ENCODE measurements at regions of chr11 and their contacts with region 1.

Region 1: DNA sequence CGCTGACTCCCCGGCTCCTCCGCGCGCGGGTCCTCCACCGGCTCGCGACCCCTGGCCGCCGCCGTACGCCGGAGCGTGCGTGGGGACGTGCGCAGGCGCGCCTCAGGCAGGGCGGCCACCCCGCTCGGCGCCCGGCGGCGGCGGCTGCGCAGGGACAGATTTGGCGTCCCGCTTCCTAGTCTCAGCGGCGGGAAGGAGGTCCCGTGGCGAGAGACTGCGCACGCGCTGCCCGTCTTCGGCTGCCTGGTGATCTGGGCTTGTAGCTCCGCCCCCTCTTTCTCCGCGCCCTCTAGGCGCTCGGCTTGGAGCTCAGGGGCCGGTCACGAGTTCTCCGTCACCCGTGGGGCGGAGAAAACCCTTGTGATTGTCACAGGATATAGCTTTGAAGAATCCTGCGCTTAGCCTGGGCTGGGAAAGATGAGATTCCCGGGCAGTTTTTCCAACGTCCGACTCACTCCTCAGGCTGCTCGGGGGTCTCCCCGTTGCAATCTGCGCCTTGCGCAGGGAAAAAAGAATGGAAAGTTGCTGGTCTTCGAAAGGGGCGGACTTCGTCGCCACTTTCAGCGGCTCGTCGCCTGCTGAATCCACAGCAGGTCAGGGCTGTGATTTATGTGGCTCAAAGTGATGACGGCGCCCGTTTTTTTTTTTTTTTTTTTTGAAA is at the start of gene PATL1:
- DNase-seq: peak; percentile 99 to 100 (median 100)
- ATAC-seq: peak; percentile 97 to 99 (median 98)
- H3K4me3 ChIP-seq: peak within 1 kb of the TSS; percentile 71 to 99 (median 90)
- H3K27ac ChIP-seq: peak within 1 kb of the TSS; percentile 82 to 99 (median 94)
- H3K4me1 ChIP-seq: peaks cover 6 to 41% (median 20%) of the 10 kb centered on the region in 12 donors
- H3K27me3 ChIP-seq: no peaks in the 10 kb centered on the region
- CTCF ChIP-seq: no peak
- POLR2A ChIP-seq: peak; percentile 9 to 89
- total RNA-seq, gene PATL1: 14.4 to 33.3 (median 24.8) TPM

Region 2: DNA sequence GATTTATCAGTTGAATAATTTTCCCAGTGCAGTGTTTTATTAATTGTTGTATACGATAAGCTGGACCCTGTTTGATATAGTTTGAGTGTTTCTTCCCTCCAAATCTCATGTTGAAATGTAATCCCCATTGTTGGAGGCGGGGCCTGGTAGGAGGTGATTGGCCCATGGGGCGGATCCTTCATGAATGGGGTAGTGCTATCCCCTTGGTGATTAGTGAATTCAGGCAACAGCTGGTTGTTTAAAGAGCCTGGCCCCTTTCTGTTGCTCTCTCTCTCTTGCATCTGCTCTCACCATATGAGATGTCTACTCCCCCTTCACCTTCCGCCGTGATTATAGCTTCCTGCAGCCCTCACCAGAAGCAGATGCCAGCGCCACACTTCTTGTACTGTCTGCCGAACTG is 231.3 kb before region 1 on chr11:
- intact Hi-C with region 1: no loop called
- DNase-seq: no peak
- ATAC-seq: no peak
- H3K4me3 ChIP-seq: no peak overlapping the region
- H3K27ac ChIP-seq: no peak overlapping the region
- H3K4me1 ChIP-seq: no peaks in the 10 kb centered on the region
- H3K27me3 ChIP-seq: no peaks in the 10 kb centered on the region
- CTCF ChIP-seq: no peak
- POLR2A ChIP-seq: no peak

Region 3: DNA sequence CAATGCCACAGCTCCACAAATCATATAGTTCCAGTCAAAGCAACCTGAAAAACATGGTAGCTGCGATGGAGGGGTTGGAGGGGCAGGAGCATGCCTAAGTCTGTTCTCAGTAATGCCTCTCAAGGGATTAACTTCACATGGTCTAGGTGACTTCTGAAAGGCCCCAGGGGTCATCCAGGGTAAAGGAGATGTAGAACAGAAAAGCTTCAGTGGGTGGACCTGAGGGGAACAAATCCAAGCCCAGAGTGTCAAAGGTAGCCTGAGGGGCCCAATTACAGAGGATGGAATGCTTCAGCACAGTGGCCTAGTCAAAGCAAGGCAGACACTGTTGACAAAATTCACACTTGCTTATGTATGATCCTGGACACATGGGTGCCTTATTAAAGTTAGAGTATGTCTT is 134.4 kb before region 1 on chr11:
- intact Hi-C with region 1: loop called in 2 of 10 experiments (anchors 5 kb)
- DNase-seq: no peak
- ATAC-seq: no peak
- H3K4me3 ChIP-seq: no peak overlapping the region
- H3K27ac ChIP-seq: no peak overlapping the region
- H3K4me1 ChIP-seq: peaks cover 0 to 10% (median 0%) of the 10 kb centered on the region in 12 donors
- H3K27me3 ChIP-seq: no peaks in the 10 kb centered on the region
- CTCF ChIP-seq: no peak
- POLR2A ChIP-seq: no peak

Region 4: DNA sequence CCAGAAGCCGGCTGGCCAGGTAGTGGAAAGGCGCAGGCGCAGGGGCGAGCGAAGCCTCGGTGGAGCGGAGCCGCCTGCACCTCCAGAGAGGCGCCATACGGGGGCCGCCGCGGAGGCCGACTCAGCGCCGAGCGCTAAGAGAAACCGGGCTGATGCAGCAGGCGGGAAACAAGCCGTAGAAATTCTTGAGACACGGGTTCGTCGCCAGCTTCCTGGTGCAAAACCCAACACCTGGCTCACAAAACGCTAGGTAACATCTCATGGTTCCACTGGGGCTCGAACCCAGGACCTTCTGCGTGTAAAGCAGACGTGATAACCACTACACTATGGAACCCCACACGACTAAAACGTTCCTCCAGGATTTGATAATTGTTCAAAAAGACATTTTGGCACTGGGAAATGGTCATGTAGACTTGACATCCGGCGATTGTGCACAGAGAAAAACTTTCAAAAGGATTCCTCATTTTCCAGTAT is 118.7 kb before region 1 on chr11:
- intact Hi-C with region 1: loop called in 3 of 10 experiments (anchors 2 to 10 kb)
- DNase-seq: peak; percentile 62 to 83 (median 78)
- ATAC-seq: peak; percentile 74 to 91 (median 86)
- H3K4me3 ChIP-seq: peak overlapping the region; percentile 24 to 68 (median 56)
- H3K27ac ChIP-seq: peak overlapping the region; percentile 43 to 89 (median 80)
- H3K4me1 ChIP-seq: peaks cover 0 to 44% (median 0%) of the 10 kb centered on the region in 12 donors
- H3K27me3 ChIP-seq: peaks cover 0 to 2% (median 0%) of the 10 kb centered on the region in 9 donors
- CTCF ChIP-seq: peak; percentile 19 to 62 (median 40)
- POLR2A ChIP-seq: no peak

Region 5: DNA sequence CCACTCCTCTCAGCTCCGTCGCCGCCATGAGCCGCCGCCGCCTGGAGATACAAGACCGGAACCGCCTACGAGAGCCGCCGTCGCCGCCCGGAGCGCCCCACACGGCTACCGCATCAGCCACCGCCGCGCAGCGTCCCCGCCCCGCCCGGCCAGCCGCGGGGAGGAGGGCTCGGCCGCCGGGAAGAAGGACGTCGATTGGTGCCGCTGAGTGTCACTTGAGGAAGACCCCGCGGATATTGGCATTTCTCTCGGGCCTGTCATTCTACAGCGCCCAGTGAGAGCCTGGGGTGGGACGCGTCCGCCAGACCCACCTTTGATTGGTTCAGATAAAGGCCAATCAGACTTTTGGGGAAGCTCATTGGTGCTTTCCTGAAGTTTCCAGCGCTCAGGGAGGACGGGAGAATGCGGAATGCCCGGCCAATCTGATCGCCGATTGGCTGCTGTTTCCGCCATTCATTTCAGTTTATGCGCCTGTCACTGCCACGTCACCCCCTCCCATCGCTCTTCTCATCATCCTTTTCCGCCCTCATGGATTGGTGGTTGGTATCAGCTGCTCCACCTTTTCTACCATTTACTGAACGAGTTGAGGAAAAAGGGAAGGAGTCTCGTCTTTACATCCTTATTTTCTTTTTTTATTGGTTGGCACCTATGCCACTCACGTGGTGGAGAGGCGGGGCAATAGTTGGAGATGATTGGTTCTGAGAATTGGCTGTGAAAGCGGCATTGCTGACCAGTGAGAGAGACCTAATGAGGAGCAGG is 53.3 kb before region 1 on chr11 and contains the start of gene OSBP:
- intact Hi-C with region 1: loop called in 5 of 10 experiments (anchors 2 to 10 kb)
- DNase-seq: peak; percentile 97 to 100 (median 100)
- ATAC-seq: peak; percentile 93 to 96 (median 94)
- H3K4me3 ChIP-seq: peak within 1 kb of the TSS; percentile 82 to 92 (median 86)
- H3K27ac ChIP-seq: peak within 1 kb of the TSS; percentile 87 to 95 (median 92)
- H3K4me1 ChIP-seq: peaks cover 0 to 46% (median 39%) of the 10 kb centered on the region in 12 donors
- H3K27me3 ChIP-seq: no peaks in the 10 kb centered on the region
- CTCF ChIP-seq: peak in 3 of 12 donors; percentile 2 to 20 (median 5)
- POLR2A ChIP-seq: peak in 1 of 2 donors; percentile 80
- total RNA-seq, gene OSBP: 23.4 to 48.3 (median 33.1) TPM

Region 6: DNA sequence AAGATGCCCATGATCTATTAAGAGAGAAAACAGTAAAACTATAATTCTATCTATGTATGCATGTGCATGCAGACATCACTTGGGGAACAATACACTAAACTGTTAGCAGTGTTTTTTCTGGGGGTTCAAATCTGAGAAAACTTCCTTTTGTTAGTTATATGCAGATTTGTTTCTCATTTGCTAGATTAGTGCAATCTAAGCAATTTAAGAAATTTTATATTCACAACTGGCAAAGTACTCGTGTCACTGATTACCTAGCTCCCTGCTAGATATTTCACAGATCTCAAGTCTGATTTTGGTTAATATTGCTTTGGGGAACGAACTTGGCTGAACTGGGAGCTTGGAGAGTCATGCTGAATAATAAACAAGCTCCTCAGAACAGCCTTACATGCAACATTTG is 38.6 kb before region 1 on chr11:
- intact Hi-C with region 1: no loop called
- DNase-seq: no peak
- ATAC-seq: no peak
- H3K4me3 ChIP-seq: no peak overlapping the region
- H3K27ac ChIP-seq: no peak overlapping the region
- H3K4me1 ChIP-seq: no peaks in the 10 kb centered on the region
- H3K27me3 ChIP-seq: no peaks in the 10 kb centered on the region
- CTCF ChIP-seq: no peak
- POLR2A ChIP-seq: no peak

Region 7: DNA sequence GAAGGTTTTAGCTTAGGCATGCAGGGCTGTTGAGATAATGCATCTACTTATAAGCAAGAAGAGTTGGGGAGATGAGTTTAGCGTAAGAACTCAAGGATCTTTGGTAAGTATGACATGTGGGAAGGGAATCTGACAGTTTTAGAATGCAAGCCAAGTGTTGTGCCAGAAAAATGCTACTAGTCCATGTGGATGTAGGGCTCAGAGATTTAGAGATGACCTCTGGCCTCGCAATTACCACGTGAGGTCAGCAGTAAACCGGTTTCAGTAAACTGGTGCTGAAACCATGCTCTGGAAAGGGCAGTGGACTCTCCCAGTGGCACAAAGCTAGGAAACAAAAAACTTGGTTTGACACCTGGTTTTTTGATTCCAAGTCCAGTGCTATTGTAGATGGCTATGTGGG is 122.6 kb after region 1 on chr11:
- intact Hi-C with region 1: loop called in 1 of 10 experiments (anchors 10 kb)
- DNase-seq: no peak
- ATAC-seq: no peak
- H3K4me3 ChIP-seq: no peak overlapping the region
- H3K27ac ChIP-seq: no peak overlapping the region
- H3K4me1 ChIP-seq: peaks cover 0 to 15% (median 11%) of the 10 kb centered on the region in 12 donors
- H3K27me3 ChIP-seq: no peaks in the 10 kb centered on the region
- CTCF ChIP-seq: no peak
- POLR2A ChIP-seq: no peak

Measured in heart left ventricle (tissue), 16 donors.